ENCODE measurements at regions of chr13 and their contacts with region 1.

Region 1: DNA sequence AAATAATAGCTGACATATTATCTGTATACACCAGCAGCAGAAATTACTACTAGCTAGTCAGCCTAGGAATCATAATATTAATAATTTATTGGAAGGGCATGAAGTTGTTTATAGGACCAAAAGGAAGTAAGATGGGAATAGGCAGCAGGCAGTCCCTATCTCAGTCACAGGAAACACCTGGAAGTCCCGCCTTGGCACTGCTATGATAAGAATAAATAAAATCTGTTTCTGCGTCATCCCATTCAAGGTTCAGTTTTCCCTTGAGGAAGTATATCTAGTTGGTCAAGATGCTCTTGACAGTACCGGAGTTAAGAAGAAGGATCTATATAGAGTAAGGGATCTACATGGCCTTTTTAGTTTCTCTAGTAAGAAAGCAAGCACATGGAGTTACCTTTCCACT is 830.8 kb downstream of the DIAPH3 start:
- DNase-seq: no peak
- ATAC-seq: no peak
- H3K4me3 ChIP-seq: no peak overlapping the region
- H3K4me3 Mint-ChIP-seq: no peak overlapping the region
- H3K27ac ChIP-seq: no peak overlapping the region
- H3K27ac Mint-ChIP-seq: no peak overlapping the region
- H3K4me1 ChIP-seq: no peaks in the 10 kb centered on the region
- H3K4me1 Mint-ChIP-seq: no peaks in the 10 kb centered on the region
- H3K27me3 ChIP-seq: no peaks in the 10 kb centered on the region
- H3K27me3 Mint-ChIP-seq: peaks cover 2 to 12% of the 10 kb centered on the region in 2 donors

Region 2: DNA sequence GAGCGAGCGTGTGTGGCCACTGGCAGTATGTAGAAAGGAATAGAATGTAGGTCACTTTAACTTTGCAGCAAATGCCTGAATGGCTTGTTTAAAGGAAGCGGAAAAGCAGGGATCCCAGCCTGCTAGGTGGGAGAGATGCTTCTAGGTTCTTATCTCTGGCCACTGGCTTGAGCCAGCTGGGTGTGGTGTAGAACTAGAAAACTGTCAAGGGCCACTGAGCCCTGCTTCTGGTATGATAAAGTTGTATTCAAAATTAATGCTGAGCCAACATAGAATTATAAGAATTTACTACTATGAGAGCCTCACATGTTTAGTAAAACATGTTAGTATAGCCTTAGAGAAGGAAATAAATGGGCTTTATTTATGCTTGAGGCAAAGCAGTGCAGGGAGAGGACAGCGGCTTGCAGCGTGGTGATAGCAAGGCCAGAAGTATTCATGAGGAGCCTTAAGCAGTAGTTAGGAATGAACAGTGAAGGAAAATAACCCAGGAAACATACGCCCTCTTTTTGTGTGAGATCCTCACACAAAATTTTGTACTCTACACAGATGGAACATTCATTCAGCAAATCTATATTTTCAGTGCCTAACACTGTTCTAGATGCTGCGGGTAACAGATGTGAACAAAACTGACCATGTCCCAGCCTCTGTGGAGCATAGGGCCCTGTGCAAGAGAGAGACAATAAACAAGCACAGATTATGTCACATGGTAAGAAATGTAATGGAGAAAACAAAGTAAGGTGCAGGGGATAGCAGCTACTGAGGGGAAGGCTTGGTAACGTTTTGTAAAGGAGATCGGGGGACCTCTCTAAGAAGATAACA is 32.4 kb before region 1 on chr13:
- CTCF ChIA-PET with region 1: no interaction called
- POLR2A ChIA-PET with region 1: interaction called in 1 of 2 experiments, 14 read pairs
- DNase-seq: no peak
- ATAC-seq: no peak
- H3K4me3 ChIP-seq: no peak overlapping the region
- H3K4me3 Mint-ChIP-seq: no peak overlapping the region
- H3K27ac ChIP-seq: no peak overlapping the region
- H3K27ac Mint-ChIP-seq: no peak overlapping the region
- H3K4me1 ChIP-seq: no peaks in the 10 kb centered on the region
- H3K4me1 Mint-ChIP-seq: no peaks in the 10 kb centered on the region
- H3K27me3 ChIP-seq: no peaks in the 10 kb centered on the region
- H3K27me3 Mint-ChIP-seq: no peaks in the 10 kb centered on the region

Measured in T-cell (primary cell).